H1 (cell line): ENCODE measurements at regions of chr18 and their contacts with region 1.

Region 1: DNA sequence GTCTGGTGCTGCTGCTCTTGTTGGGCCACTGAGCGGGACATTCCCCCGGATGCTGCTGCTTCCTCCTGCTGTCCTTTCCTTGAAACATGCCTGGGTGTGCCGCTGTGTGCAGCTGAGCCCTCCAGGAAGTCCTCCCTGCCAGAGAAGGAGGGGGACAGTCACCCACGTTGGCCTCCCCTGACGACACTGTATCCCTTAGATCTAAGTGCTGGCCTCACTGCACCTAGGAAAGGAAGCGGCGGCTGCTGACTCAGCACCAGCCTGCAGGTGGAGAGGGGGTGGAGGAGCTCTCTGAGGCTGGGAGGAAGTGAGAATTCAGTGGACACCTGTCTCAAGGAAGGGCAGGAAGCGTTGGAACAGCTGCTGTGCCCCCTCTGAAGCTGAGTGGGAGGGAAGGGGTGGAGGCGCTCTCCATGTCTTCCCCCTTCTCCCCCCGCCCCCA is 239.8 kb downstream of the HAUS1 start:
- DNase-seq: peak in 1 of 2 experiments; percentile 61
- H3K4me3 ChIP-seq: no peak overlapping the region
- H3K27ac ChIP-seq: no peak overlapping the region
- H3K4me1 ChIP-seq: peaks cover 5 to 20% (median 13%) of the 10 kb centered on the region in 4 experiments
- H3K27me3 ChIP-seq: no peaks in the 10 kb centered on the region
- CTCF ChIP-seq: peak; percentile 17 to 35 (median 18); a peak in 3 of 4 replicates
- EP300 ChIP-seq: no peak
- POLR2A ChIP-seq: no peak
- RAD21 ChIP-seq: peak in 1 of 2 experiments; percentile 13; a peak in 1 of 4 replicates

Region 2: GRCh38 chr18:46333431-46334135 is 10.4 kb before region 1 on chr18:
- CTCF ChIA-PET with region 1: interaction called, 4 read pairs
- POLR2A ChIA-PET with region 1: interaction called, 11 read pairs
- DNase-seq: peak in 1 of 2 experiments; percentile 56
- H3K4me3 ChIP-seq: peak overlapping the region; percentile 47 to 79 (median 58)
- H3K27ac ChIP-seq: no peak overlapping the region
- H3K4me1 ChIP-seq: peaks cover 6 to 24% (median 15%) of the 10 kb centered on the region in 4 experiments
- H3K27me3 ChIP-seq: peaks cover 0 to 22% (median 14%) of the 10 kb centered on the region in 4 experiments; a peak in 5 of 7 replicates
- CTCF ChIP-seq: no peak
- EP300 ChIP-seq: no peak
- POLR2A ChIP-seq: no peak
- RAD21 ChIP-seq: no peak

Region 3: DNA sequence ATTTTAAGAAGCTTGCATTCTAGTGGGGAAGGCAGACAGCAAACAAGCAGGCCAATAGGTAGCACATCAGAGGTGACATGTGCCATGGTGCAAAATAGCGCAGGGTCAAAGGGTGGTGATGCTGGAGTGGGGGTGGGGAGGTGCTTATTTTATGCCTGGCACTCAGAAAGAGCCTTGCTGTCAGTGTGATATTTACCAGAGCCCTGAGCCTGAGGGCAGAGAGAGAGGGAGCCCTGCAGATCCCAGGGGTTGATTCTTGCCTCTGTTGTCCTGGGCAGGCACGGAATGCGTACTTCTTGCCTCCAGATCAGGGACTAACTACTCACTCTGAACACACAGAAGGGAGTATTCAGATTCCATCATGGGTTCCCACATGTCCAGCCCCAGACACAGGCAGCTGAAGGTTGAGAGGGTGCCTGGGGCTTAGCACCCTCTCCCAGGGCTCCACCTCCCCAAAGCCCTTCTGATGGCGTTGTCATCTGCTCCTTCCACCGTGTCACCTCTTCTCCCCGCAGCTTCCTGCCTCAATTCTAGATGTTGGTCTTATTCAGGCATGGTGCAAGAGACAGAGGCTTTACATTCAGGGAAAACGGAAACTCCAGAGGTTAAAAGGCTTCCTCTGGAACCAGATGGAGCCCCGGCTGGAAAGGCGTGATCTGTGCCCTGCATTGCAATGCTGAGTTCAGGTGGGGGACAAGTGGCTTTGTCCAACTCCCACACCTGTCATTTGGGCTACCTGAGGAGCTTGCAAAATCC is 12.5 kb after region 1 on chr18:
- CTCF ChIA-PET with region 1: interaction called, 26 read pairs
- POLR2A ChIA-PET with region 1: interaction called, 4 read pairs
- DNase-seq: no peak
- H3K4me3 ChIP-seq: no peak overlapping the region
- H3K27ac ChIP-seq: no peak overlapping the region
- H3K4me1 ChIP-seq: peaks cover 0 to 4% (median 1%) of the 10 kb centered on the region in 4 experiments; a peak in 5 of 7 replicates
- H3K27me3 ChIP-seq: no peaks in the 10 kb centered on the region
- CTCF ChIP-seq: no peak
- EP300 ChIP-seq: no peak
- POLR2A ChIP-seq: no peak
- RAD21 ChIP-seq: no peak

Region 4: DNA sequence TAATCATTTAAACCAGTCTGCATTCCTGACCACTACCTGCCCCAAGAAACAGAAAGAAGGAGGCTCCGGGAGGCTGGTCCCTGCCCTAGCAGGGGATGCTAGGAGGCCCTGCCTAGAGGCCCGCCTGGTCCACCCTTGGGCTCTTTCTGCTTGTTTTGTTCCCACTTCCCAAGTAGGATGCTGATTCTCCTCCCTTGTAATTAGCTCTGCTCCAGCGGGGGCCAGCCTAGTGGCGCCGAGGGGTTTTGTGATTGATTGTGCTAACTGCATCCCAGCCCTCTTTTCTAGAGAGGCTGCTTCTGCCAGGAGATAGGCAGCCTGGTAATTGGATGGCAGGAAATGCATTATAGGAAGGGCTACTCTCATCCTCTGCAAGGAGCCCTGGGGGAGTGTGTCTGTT is 93.1 kb after region 1 on chr18:
- CTCF ChIA-PET with region 1: no interaction called
- POLR2A ChIA-PET with region 1: no interaction called
- DNase-seq: no peak
- H3K4me3 ChIP-seq: no peak overlapping the region
- H3K27ac ChIP-seq: no peak overlapping the region
- H3K4me1 ChIP-seq: peaks cover 0 to 13% (median 7%) of the 10 kb centered on the region in 4 experiments; a peak in 6 of 7 replicates
- H3K27me3 ChIP-seq: no peaks in the 10 kb centered on the region
- CTCF ChIP-seq: no peak
- EP300 ChIP-seq: no peak
- POLR2A ChIP-seq: no peak
- RAD21 ChIP-seq: no peak